ENCODE measurements at regions of chr7 and their contacts with region 1.

Region 1: GRCh38 chr7:65037740-65038678 is 31.5 kb upstream of the ERV3-1 start:
- DNase-seq: peak; percentile 91 to 92
- H3K4me3 ChIP-seq: peak overlapping the region; percentile 76 to 89 (median 81)
- H3K27ac ChIP-seq: peak overlapping the region; percentile 86 to 90
- H3K4me1 ChIP-seq: peaks cover 0 to 6% of the 10 kb centered on the region in 2 donors
- H3K27me3 ChIP-seq: no peaks in the 10 kb centered on the region
- CTCF ChIP-seq: no peak
- POLR2A ChIP-seq: no peak

Region 2: DNA sequence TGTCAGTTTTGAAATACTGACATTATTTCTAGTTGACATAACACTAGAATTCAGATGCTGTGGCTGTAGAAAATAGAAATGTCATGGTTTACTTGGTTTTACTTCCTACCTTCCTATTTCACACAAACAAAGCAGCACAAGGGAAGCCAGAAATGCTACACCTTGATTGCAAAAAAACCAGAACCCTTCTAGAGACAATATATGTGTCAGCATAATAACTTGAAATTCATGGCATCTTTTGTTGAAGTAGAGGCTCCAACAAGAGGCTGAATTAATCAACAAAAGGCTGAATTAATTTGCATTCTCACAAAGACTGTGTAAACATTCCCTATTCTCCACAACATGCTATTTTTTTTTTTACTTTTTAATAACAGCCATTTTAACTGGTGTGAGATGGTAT is 72.4 kb before region 1 on chr7:
- intact Hi-C with region 1: no loop called
- DNase-seq: no peak
- H3K4me3 ChIP-seq: no peak overlapping the region
- H3K27ac ChIP-seq: no peak overlapping the region
- H3K4me1 ChIP-seq: no peaks in the 10 kb centered on the region
- H3K27me3 ChIP-seq: no peaks in the 10 kb centered on the region
- CTCF ChIP-seq: no peak
- POLR2A ChIP-seq: no peak

Region 3: DNA sequence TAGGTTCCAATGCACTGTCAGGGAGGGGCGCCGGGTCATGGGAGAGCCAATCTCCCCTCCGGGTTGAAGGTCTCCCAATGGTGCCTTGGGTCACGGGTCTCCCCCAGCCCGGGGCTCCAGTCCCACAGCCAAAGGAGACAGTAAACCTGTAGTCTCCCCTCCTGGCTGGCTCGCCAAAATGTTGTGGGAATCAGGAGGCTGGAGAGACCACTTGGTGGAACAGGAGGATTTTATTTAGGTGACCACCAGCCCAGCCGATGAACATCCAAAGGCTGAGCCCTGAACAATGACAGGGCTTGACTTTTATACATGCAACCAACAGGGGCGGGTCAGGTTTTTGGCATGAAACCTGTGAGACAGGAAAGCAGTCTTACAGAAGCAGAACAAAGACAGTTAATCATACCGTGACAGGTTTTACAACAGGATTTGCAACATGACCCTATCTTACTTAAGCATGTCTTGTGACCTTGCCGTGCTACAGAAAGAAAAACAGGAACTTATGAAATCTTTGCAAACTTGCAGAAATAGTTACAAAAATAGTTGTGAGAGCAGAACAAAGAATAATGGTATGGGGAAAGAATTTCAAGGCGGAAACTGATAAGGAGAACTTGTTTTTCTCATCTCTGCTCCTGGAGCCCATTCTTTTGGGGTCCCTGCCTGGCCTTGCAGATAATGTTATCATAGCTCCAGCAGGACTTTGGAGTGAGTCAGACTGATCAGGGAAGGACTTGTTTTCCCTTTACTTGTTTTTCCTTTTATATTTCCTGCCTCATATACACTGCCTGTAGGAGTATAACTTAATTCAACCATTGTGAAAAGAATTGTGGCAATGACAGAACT is 38.6 kb before region 1 on chr7:
- intact Hi-C with region 1: loop called (anchors 5 kb)
- DNase-seq: no peak
- H3K4me3 ChIP-seq: peak overlapping the region in 1 of 3 donors; percentile 19
- H3K27ac ChIP-seq: peak overlapping the region; percentile 91 to 93
- H3K4me1 ChIP-seq: peaks cover 0 to under 1% of the 10 kb centered on the region in 2 donors
- H3K27me3 ChIP-seq: no peaks in the 10 kb centered on the region
- CTCF ChIP-seq: no peak
- POLR2A ChIP-seq: no peak